Ascending aorta (tissue), 2 donors: ENCODE measurements at regions of chr14 and their contacts with region 1.

Region 1: DNA sequence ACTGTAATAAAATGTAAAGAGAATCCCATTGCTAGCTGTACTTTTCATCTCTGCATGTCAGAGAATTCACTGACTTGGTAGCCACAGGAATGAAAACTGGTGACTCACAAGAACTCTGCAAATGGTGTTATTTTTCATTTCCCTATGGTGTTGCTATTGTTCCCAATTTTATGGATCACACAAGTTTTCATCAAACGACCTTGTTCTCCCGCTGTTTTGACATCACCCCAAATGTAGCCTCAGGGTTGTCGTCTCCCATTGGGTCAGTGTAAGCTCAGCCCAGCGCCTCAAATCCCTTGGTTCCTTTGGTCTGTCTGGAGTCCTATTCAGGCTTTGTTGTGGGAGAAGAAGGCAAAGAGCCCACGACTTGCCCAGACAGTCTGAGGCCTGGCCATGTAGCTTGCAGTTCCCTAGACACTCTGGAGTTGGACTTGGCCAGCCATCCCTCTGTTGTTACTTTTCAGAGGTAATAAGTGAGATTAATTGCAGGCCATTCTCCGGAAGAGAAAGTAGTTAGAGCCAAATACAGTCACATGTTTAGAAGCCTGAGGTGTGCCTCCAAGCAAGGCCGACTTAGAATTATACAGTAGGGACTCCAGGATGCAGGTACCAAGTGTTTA is 159.2 kb downstream of the TGFB3 start:
- DNase-seq: no peak
- H3K4me3 ChIP-seq: no peak overlapping the region
- H3K27ac ChIP-seq: peak overlapping the region; percentile 79 to 87
- H3K4me1 ChIP-seq: peaks cover 8 to 33% of the 10 kb centered on the region in 2 donors
- H3K27me3 ChIP-seq: no peaks in the 10 kb centered on the region
- CTCF ChIP-seq: no peak

Region 2: GRCh38 chr14:75861161-75861621 is 38.6 kb after region 1 on chr14:
- intact Hi-C with region 1: loop called (anchors 5 kb)
- DNase-seq: no peak
- H3K4me3 ChIP-seq: no peak overlapping the region
- H3K27ac ChIP-seq: no peak overlapping the region
- H3K4me1 ChIP-seq: peaks cover 0 to 4% of the 10 kb centered on the region in 2 donors
- H3K27me3 ChIP-seq: no peaks in the 10 kb centered on the region
- CTCF ChIP-seq: no peak

Region 3: DNA sequence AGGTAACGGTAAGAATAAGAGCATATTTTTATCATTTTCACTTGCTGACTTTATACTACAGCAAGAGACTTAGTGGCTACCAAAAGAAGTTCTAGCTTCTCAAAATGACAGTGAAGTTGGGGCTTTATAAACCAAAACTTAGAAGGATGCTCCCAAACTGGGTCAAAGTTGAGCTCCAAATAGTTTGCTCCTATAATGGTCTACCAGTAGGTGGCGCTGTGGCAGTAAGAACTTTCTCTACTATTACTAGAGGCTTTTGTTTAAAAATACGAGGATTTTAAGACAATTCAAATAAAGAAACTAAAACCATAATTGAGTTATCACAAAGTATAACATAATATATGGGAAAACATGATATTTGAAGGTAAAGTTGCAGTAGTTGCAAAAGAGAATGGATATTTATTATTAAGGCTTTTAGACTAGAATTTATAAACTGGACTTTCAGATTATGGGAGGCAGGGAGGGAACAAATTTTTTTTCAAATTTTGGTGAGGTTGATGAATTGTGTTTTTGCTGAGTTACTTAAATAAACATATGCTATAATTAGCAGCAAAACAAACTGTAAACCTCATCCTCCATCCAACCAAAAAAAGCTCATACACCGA is 84.1 kb after region 1 on chr14:
- intact Hi-C with region 1: loop called (anchors 5 kb)
- DNase-seq: peak in 1 of 2 donors; percentile 79
- H3K4me3 ChIP-seq: peak overlapping the region in 1 of 2 donors; percentile 6
- H3K27ac ChIP-seq: peak overlapping the region; percentile 42 to 51
- H3K4me1 ChIP-seq: peaks cover 0 to 5% of the 10 kb centered on the region in 2 donors
- H3K27me3 ChIP-seq: no peaks in the 10 kb centered on the region
- CTCF ChIP-seq: peak; percentile 69 to 87 (median 85)